Gastrocnemius medialis (tissue), 4 donors: ENCODE measurements at regions of chr22 and their contacts with region 1.

Region 1: DNA sequence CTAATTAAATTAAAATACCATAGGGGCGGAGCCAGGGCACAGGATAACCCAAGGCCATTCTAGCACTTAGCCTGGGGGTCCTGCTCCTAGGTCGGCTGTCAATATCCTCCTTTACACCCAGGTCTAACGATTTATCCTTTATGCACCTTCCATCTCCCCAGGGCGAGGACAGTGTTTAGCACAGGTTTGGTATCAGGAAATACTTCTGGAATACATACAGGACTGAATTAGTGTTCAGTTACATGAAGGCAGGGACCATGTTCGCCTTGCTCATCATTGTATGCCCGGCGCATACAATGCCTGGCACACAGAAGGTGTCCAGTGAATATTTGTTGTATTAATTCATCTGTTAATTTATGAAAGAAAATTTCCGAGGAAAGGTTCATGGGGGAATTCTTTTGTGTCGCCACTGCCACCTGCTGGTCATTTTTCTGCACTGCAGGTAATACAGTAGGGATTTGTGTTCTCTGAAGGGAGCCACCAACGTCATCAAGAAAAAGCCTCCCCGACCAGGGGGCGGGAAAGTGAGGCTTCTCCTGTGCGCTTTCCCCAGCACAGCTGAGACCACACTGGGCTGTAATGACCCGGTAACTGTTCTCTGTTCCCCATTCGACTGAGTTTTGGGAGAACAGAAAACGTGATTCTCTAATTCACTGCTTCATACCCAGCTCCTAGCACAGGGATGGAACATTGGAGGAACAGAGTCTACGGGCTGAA is 68.7 kb upstream of the ASPHD2 start:
- DNase-seq: peak; percentile 8 to 46
- ATAC-seq: peak in 1 of 2 donors; percentile 58
- H3K4me3 ChIP-seq: peak overlapping the region in 1 of 4 donors; percentile 17
- H3K27ac ChIP-seq: no peak overlapping the region
- H3K4me1 ChIP-seq: peaks cover 0 to 10% of the 10 kb centered on the region in 2 donors
- H3K27me3 ChIP-seq: no peaks in the 10 kb centered on the region
- CTCF ChIP-seq: peak; percentile 47 to 94 (median 79)
- POLR2A ChIP-seq: no peak

Region 2: GRCh38 chr22:26172389-26172990 is 187.8 kb before region 1 on chr22:
- in situ Hi-C with region 1: no loop called
- intact Hi-C with region 1: loop called (anchors 2 kb)
- DNase-seq: no peak
- ATAC-seq: peak; percentile 46 to 61
- H3K4me3 ChIP-seq: no peak overlapping the region
- H3K27ac ChIP-seq: no peak overlapping the region
- H3K4me1 ChIP-seq: peaks cover 0 to 9% of the 10 kb centered on the region in 2 donors
- H3K27me3 ChIP-seq: peaks cover 28 to 46% (median 32%) of the 10 kb centered on the region in 3 donors
- CTCF ChIP-seq: peak; percentile 32 to 71 (median 41)
- POLR2A ChIP-seq: no peak

Region 3: GRCh38 chr22:26213826-26214225 is 146.5 kb before region 1 on chr22:
- in situ Hi-C with region 1: no loop called
- intact Hi-C with region 1: no loop called
- DNase-seq: no peak
- ATAC-seq: no peak
- H3K4me3 ChIP-seq: no peak overlapping the region
- H3K27ac ChIP-seq: no peak overlapping the region
- H3K4me1 ChIP-seq: peaks cover 0 to 3% of the 10 kb centered on the region in 2 donors
- H3K27me3 ChIP-seq: no peaks in the 10 kb centered on the region
- CTCF ChIP-seq: no peak
- POLR2A ChIP-seq: no peak